Naive thymus-derived CD4-positive, alpha-beta T cell (primary cell): ENCODE measurements at regions of chr17 and their contacts with region 1.

Region 1: DNA sequence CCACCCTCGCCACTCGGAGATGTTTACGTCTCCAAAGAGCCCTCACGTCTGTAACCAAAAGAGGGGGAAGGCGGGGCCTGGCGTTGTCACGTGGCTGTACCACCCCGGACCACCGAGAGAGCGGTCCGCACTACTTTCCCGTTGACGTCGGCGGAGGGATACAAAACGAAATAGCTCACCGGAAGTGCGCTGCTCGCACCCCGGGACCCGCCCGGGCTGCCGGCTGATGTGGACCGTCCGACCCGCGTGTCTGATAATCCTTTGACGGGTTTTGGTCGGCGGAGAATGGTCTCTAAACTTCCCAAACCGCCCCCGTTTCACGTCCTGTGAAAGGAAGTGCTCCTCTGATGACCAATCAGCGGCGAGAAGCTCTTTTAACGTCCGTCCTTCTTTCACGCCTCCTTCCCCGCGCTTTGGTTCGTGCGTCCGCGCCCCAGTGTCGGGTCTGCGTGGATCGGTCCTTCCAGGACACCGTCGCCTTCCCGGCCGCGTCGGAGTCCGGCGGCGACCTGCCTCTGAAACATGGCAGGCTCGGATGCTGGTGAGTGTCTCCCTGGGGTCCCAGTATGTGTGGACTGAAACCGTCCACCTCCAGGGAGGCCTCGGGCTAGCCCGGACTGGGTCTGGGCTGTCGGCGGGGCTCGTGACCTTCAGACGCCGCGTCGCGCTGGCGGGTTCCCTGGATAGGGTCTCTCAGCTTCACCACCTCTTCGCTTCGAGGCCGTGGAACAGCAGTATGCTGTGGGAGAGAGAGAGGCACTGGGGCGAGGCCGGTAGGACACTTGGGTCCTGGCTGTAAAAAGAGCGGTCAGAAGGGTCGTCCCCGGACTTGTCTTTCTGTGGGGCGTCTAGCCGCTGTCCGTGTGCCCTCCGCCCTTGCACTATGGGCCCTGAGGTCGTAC is at the start of gene CEP95:
- DNase-seq: peak in 7 of 9 donors; percentile 85 to 98 (median 97)
- ATAC-seq: peak; percentile 78
- H3K4me3 ChIP-seq: peak within 1 kb of the TSS; percentile 98
- H3K4me3 Mint-ChIP-seq: peak within 1 kb of the TSS; percentile 97 to 100 (median 99)
- H3K27ac ChIP-seq: peak within 1 kb of the TSS; percentile 100
- H3K27ac Mint-ChIP-seq: peak within 1 kb of the TSS; percentile 99 to 100 (median 100)
- H3K4me1 ChIP-seq: peaks cover 41 to 42% of the 10 kb centered on the region in 2 donors
- H3K4me1 Mint-ChIP-seq: peaks cover 31 to 84% (median 70%) of the 10 kb centered on the region in 7 donors
- H3K27me3 ChIP-seq: no peaks in the 10 kb centered on the region
- H3K27me3 Mint-ChIP-seq: peaks cover 0 to 11% (median 0%) of the 10 kb centered on the region in 5 donors
- total RNA-seq, gene CEP95: 46.7 to 192 (median 115) TPM

Region 2: DNA sequence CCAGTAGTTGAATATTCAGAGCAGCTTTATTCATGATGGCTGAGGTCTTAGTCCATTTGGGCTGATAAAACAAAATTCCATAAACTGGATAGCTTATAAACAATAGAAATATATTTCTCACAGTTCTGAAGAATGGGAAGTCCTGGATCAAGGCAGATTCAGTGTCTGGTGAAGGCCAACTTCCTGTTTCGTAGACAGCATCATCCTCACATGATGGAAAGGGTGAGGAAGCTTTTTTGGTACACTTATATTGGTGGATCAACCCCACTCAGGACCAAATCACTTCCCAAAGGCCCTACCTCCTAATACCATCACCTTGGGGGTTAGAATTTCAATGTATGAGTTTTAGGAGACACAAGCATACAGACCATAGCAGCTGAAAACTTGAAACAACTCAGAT is 1284.9 kb before region 1 on chr17:
- CTCF ChIA-PET with region 1: no interaction called
- POLR2A ChIA-PET with region 1: no interaction called
- intact Hi-C with region 1: no loop called
- DNase-seq: no peak
- ATAC-seq: peak; percentile 52
- H3K4me3 ChIP-seq: no peak overlapping the region
- H3K4me3 Mint-ChIP-seq: no peak overlapping the region
- H3K27ac ChIP-seq: no peak overlapping the region
- H3K27ac Mint-ChIP-seq: no peak overlapping the region
- H3K4me1 ChIP-seq: no peaks in the 10 kb centered on the region
- H3K4me1 Mint-ChIP-seq: peaks cover 0 to 1% (median 0%) of the 10 kb centered on the region in 7 donors
- H3K27me3 ChIP-seq: no peaks in the 10 kb centered on the region
- H3K27me3 Mint-ChIP-seq: no peaks in the 10 kb centered on the region

Region 3: DNA sequence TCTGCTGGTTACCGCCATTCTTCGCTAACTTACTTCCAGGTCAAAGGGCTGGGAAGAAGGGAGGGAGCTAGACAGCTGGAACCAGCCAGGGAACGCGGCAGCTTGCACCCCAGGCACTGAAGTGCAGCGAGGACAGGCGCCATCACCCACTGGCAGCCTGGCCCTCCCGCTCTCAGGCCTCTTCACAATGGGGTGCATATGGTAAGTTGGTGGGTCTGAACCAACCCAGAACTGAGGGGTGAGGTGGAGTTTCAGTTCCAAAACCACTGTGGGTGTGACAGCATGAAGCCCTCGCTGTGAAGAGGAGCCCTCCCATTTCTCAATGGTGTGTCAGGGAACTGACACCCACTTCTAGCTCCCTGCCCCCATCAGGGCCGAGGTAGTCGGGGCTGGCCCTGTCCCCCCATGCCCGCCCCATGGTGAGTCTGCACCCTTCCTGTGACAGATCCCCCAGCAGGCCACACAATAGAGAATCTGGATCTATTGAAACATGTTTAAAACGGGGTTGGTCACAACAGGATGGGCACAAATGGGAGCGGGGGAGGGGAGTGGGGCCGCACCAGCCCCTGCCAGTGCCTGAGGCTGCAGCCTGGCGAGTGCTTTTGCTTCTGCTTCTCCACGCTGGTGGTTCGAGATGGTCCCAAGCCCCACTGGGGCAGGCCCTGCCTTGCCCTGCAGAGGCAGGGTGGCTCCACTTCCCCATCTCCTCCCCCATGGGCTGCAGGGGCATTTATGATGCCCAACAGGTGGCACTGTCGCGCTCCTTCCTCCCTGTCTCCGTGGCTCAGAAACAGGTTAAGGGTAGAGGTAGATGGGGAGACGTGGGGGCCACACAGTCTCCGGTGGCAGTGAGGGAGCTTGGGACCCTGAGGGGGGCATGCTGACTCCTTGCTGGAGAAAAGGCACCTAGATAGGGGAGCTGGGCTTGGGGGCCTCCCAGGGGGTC is 809.2 kb before region 1 on chr17:
- CTCF ChIA-PET with region 1: no interaction called
- POLR2A ChIA-PET with region 1: interaction called, 14 read pairs
- intact Hi-C with region 1: no loop called
- DNase-seq: peak; percentile 74 to 91 (median 86)
- ATAC-seq: peak; percentile 57
- H3K4me3 ChIP-seq: peak overlapping the region; percentile 81
- H3K4me3 Mint-ChIP-seq: peak overlapping the region; percentile 83 to 100 (median 98)
- H3K27ac ChIP-seq: peak overlapping the region; percentile 93
- H3K27ac Mint-ChIP-seq: peak overlapping the region; percentile 89 to 100 (median 99)
- H3K4me1 ChIP-seq: peaks cover 43 to 46% of the 10 kb centered on the region in 2 donors
- H3K4me1 Mint-ChIP-seq: peaks cover 45 to 61% (median 56%) of the 10 kb centered on the region in 7 donors
- H3K27me3 ChIP-seq: no peaks in the 10 kb centered on the region
- H3K27me3 Mint-ChIP-seq: no peaks in the 10 kb centered on the region

Region 4: DNA sequence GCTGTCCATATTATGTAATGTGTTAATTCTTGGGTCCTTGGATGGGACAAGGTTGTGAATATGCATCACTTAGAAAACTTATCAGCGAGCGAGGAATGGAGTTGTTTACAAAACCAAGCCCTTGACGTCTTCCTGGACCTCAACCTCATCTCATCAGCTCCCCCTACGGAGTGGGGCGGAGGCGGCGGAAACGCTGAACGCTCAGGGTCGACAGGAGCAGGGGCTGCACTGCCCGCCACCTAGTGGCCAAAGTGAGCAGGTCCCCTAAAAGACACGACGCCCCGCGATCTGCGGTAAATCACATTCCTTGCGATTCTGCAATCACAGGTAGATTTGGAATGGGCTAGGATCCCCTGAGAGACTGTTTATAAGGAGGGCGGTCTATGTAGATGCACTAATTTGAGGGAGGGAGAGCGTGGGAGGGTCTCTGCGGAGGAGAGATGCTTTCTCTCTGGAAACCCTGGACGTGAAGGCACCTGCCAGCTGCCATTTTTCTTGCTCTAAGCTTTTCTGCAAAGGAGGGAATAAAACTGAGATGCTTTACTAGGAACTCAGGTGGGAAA is 481.0 kb before region 1 on chr17:
- CTCF ChIA-PET with region 1: no interaction called
- POLR2A ChIA-PET with region 1: interaction called, 18 read pairs
- intact Hi-C with region 1: loop called (anchors 2 to 5 kb)
- DNase-seq: peak; percentile 76 to 98 (median 95)
- ATAC-seq: peak; percentile 95
- H3K4me3 ChIP-seq: peak overlapping the region; percentile 64
- H3K4me3 Mint-ChIP-seq: peak overlapping the region; percentile 74 to 93 (median 83)
- H3K27ac ChIP-seq: peak overlapping the region; percentile 79
- H3K27ac Mint-ChIP-seq: peak overlapping the region; percentile 87 to 100 (median 96)
- H3K4me1 ChIP-seq: peaks cover 49 to 51% of the 10 kb centered on the region in 2 donors
- H3K4me1 Mint-ChIP-seq: peaks cover 37 to 73% (median 68%) of the 10 kb centered on the region in 7 donors
- H3K27me3 ChIP-seq: no peaks in the 10 kb centered on the region
- H3K27me3 Mint-ChIP-seq: no peaks in the 10 kb centered on the region

Region 5: GRCh38 chr17:64393000-64393402 is 113.8 kb before region 1 on chr17:
- CTCF ChIA-PET with region 1: no interaction called
- POLR2A ChIA-PET with region 1: interaction called, 52 read pairs
- intact Hi-C with region 1: no loop called
- DNase-seq: peak in 7 of 9 donors; percentile 29 to 63 (median 48)
- ATAC-seq: peak; percentile 67
- H3K4me3 ChIP-seq: peak overlapping the region; percentile 42
- H3K4me3 Mint-ChIP-seq: peak overlapping the region; percentile 43 to 94 (median 83)
- H3K27ac ChIP-seq: peak overlapping the region; percentile 80
- H3K27ac Mint-ChIP-seq: peak overlapping the region; percentile 56 to 98 (median 94)
- H3K4me1 ChIP-seq: peaks cover 14 to 31% of the 10 kb centered on the region in 2 donors
- H3K4me1 Mint-ChIP-seq: peaks cover 33 to 83% (median 61%) of the 10 kb centered on the region in 7 donors
- H3K27me3 ChIP-seq: no peaks in the 10 kb centered on the region
- H3K27me3 Mint-ChIP-seq: peaks cover 0 to 2% (median 0%) of the 10 kb centered on the region in 5 donors

Region 6: DNA sequence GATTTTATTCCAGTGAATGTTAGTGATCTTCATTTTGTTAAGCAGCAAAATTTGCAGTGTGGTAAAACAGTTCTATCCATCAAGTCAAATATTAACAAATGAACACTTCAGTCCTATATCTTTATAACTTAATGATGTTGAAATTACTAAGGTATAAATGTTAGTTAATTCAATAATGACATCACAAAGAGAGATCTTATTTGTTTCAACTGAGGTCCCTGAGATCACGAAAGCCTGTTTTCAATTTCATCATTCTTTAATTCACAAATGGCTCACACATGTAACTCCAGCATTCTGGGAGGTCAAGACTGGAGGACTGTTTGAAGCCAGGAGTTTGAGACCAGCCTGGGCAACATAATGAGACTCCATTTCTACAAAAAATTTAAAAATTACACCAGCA is 141.4 kb after region 1 on chr17:
- CTCF ChIA-PET with region 1: interaction called, 4 read pairs
- POLR2A ChIA-PET with region 1: interaction called, 26 read pairs
- intact Hi-C with region 1: loop called (anchors 1 kb)
- DNase-seq: no peak
- ATAC-seq: no peak
- H3K4me3 ChIP-seq: no peak overlapping the region
- H3K4me3 Mint-ChIP-seq: peak overlapping the region in 1 of 10 donors; percentile 30
- H3K27ac ChIP-seq: no peak overlapping the region
- H3K27ac Mint-ChIP-seq: peak overlapping the region in 1 of 9 donors; percentile 29
- H3K4me1 ChIP-seq: peaks cover 0 to 10% of the 10 kb centered on the region in 2 donors
- H3K4me1 Mint-ChIP-seq: peaks cover 21 to 65% (median 43%) of the 10 kb centered on the region in 7 donors
- H3K27me3 ChIP-seq: no peaks in the 10 kb centered on the region
- H3K27me3 Mint-ChIP-seq: no peaks in the 10 kb centered on the region

Region 7: DNA sequence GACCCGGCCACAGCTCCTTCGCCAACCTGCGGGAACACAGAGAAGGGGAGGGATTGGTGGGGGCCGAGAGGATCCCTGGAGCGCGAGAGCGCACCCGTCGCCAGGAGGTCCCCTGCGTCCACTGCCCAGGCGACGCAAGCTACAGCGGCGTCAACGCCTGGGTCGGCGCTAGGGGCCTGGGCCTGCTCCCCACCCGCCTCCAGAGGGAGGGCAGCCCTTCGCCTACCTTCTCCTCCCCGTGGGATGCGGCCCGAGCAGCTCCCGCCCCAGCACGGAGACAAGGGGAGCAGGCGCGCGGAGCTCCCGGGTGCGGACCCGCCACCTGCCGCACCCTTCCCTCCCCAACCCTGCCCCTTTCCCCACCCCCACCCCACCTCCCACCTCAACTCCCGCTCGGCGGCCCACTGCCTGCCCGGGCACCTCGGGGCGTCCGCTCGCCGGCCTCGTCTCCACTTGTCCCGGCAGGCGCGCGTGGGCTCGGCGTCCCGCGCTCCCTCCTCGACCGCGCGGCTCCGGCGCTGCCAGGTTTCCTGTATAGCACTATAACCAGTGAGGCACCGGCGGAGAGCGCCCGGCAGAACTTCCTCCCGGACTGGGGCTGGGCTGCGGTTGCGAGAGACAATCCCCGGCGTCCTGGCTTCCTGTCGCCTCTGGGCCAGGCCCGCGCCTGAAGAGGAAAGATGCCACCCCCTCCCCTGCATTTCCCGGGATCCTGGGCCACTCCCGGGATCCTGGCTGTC is 274.4 kb after region 1 on chr17:
- CTCF ChIA-PET with region 1: no interaction called
- POLR2A ChIA-PET with region 1: no interaction called
- intact Hi-C with region 1: loop called in 1 of 2 experiments (anchors 1 kb)
- DNase-seq: peak in 8 of 9 donors; percentile 33 to 59 (median 44)
- ATAC-seq: peak; percentile 51
- H3K4me3 ChIP-seq: peak overlapping the region; percentile 61
- H3K4me3 Mint-ChIP-seq: peak overlapping the region; percentile 66 to 82 (median 78)
- H3K27ac ChIP-seq: peak overlapping the region; percentile 25
- H3K27ac Mint-ChIP-seq: peak overlapping the region in 2 of 9 donors; percentile 32 to 79
- H3K4me1 ChIP-seq: peaks cover 15 to 28% of the 10 kb centered on the region in 2 donors
- H3K4me1 Mint-ChIP-seq: peaks cover 11 to 31% (median 23%) of the 10 kb centered on the region in 7 donors
- H3K27me3 ChIP-seq: no peaks in the 10 kb centered on the region
- H3K27me3 Mint-ChIP-seq: peaks cover 0 to 12% (median 0%) of the 10 kb centered on the region in 5 donors

Region 8: GRCh38 chr17:65561394-65562205 is 1054.8 kb after region 1 on chr17 and contains the start of gene AXIN2:
- CTCF ChIA-PET with region 1: no interaction called
- POLR2A ChIA-PET with region 1: no interaction called
- intact Hi-C with region 1: loop called in 1 of 2 experiments (anchors 2 kb)
- DNase-seq: peak; percentile 70 to 91 (median 88)
- ATAC-seq: peak; percentile 91
- H3K4me3 ChIP-seq: peak within 1 kb of the TSS; percentile 70
- H3K4me3 Mint-ChIP-seq: peak within 1 kb of the TSS in 8 of 10 donors; percentile 79 to 94 (median 87)
- H3K27ac ChIP-seq: peak within 1 kb of the TSS; percentile 92
- H3K27ac Mint-ChIP-seq: peak within 1 kb of the TSS; percentile 70 to 93 (median 90)
- H3K4me1 ChIP-seq: peaks cover 18 to 24% of the 10 kb centered on the region in 2 donors
- H3K4me1 Mint-ChIP-seq: peaks cover 10 to 37% (median 31%) of the 10 kb centered on the region in 7 donors
- H3K27me3 ChIP-seq: no peaks in the 10 kb centered on the region
- H3K27me3 Mint-ChIP-seq: peaks cover 0 to 22% (median 0%) of the 10 kb centered on the region in 5 donors
- total RNA-seq, gene AXIN2: 7.4 to 63.4 (median 39.5) TPM